Posterior vena cava (tissue), 2 donors: ENCODE measurements at regions of chr16 and their contacts with region 1.

Region 1: DNA sequence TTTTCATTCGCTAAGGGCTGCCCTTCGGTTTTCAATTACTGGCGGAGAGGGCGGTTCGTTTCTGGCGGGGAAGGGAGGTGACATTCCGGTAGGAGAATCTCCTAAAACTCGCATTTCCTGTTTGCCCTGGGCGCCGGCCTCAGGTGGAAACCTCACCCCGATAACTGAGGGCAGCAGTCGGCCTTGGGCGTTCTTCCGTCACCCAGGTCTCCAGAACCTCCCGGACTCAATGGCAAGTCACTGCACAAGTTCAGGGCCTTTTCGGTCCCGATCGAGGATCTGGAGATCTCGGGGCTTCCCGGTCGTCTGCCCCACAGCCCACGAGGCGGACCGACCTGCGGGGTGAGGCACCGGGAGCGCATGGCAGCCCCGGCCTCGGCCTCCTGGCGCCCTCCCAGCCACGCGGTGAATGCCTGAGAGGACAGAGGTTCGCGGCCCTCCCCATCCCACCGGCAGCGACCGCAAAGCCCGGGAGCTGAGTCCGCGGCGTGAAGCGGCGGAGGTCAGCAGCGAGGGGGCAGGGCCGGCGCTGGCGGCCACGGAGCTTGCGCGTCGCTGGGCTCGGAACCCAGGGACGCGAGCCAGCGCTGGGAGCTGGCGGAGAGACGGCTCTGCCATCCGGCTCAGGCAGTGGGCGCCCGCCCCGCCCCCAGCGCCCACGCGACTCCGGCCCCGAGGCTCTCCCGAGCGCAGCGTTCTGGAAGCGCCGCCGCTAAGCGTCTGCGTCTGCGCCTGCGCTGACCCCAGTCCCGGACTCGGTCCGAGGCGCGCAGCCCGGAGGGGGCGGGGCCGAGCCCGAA is 58.4 kb downstream of the SRL start:
- DNase-seq: peak; percentile 97

Region 2: DNA sequence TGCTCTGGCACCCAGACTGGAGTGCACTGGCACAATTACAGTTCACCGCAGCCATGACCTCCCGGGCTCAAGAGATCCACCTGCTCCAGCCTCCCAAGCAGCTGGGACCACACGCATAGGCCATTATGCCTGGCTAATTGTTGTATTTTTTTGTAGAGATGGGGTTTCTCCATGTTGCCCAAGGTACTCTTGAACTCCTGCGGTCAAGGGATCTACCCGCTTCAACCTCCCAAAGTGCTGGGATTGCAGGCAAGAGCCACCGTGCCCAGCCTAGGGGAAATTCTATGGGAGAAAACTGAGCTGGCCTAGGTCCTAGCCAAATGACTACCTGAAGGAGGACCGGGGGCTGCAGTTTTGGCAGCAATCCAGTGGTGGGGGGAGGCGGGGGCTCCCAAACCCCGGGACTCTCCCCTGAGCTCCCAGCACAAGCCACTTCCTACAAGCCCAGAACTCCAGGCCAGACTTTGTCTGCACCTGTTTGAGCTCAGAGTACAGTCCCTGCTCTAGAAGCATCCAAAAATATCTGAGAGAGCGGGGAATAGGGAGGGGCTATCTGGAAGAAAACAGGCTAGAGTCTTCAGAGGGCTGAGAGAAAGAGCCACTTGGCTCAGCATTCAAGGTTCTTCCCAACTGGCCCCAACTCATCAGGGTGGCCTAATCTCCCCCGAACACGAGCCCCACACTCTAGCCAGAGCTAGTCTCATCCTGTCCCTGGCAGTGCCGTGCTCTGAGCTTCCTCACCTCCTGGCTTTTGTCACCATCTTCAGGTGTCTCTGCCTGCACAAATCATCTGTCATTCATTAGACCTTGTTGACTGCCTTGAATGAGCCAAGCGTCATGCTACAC is 49.3 kb after region 1 on chr16:
- intact Hi-C with region 1: loop called in 1 of 2 experiments (anchors 2 kb)
- DNase-seq: no peak